ENCODE measurements at regions of chr5 and their contacts with region 1.

Region 1: DNA sequence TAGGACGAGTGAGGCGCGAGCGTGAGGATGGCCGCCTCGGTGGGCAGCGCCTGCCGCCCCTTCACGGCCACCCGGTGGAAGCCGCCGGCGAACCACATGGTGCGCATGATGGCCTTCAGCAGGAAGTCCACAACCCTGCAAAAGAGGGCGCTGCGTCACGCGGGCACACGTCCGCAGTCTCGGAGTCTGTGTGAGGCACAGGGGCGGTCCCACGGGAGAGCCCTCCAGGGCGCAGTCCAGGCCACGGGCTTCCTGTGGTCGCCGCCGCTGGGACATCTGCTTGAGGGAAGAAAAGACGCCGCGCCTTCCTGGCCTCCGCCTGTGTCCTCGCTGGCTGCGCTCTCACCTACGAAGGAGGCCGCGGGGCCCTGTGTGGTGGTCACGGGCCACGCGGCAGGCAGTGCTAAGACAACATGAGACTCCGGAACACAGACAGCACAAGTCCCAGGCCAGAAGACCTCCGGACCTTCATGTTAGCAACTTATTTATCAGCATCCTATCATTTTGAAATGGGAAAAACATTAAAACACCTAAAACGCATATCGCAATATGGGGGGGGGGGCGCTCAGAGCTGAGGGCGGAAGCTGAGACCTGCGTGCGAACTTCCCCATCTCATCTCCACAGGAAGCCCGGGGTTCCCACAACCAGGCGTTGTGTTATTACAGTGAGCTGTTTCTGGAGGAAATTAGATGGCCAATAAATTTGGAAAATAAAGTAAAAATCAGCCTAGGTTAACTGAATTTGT is 28.8 kb downstream of the LPCAT1 start:
- DNase-seq: peak in 2 of 5 donors; percentile 45 to 79
- ATAC-seq: peak in 2 of 4 donors; percentile 45 to 46
- H3K4me3 ChIP-seq: no peak overlapping the region
- H3K27ac ChIP-seq: peak overlapping the region in 1 of 12 donors; percentile 64
- H3K4me1 ChIP-seq: peaks cover 0 to 47% (median 2%) of the 10 kb centered on the region in 12 donors
- H3K27me3 ChIP-seq: no peaks in the 10 kb centered on the region
- CTCF ChIP-seq: no peak
- POLR2A ChIP-seq: no peak

Region 2: DNA sequence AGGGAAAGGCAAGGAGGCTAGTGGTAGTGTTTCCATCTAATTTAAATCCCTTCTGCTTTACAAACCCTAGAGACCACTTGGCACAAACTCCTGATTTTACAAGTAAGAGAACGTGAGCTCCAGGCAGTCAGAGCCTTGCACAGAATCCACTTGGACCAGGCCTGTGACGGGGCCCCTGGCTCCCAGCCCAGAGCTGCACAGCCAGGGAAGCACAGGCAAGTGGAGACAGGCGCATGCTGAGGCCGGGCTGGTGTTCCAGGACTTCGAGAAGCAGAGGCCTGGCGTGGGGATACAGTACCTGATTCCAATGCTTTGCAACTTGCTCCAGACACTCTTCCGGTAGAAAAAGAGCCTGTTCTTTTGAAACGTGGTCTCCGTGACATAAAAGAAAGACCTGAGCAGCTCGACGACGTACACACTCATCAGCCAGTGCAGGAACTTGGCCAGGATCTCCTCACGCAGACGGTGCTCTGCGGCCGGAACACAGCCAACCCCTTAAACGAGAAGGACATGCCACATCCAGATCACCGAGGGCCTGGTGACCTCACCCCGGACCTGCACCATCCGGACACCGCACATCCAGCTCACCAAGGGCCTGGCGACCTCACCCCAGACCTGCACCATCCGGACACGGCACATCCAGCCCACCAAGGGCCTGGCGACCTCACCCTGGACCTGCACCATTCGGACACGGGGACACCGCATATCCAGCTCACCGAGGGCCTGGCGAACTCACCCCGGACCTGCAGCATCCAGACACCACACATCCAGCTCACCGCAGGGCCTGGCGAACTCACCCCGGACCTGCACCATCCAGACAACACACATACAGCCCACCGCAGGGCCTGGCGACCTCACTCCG is 212.6 kb before region 1 on chr5:
- intact Hi-C with region 1: no loop called
- DNase-seq: peak in 3 of 5 donors; percentile 62 to 75 (median 70)
- ATAC-seq: peak; percentile 67 to 86 (median 77)
- H3K4me3 ChIP-seq: no peak overlapping the region
- H3K27ac ChIP-seq: no peak overlapping the region
- H3K4me1 ChIP-seq: no peaks in the 10 kb centered on the region
- H3K27me3 ChIP-seq: no peaks in the 10 kb centered on the region
- CTCF ChIP-seq: no peak
- POLR2A ChIP-seq: no peak

Region 3: GRCh38 chr5:1555011-1555807 is 60.3 kb after region 1 on chr5:
- intact Hi-C with region 1: loop called in 1 of 10 experiments (anchors 10 kb)
- DNase-seq: peak in 1 of 5 donors; percentile 45
- ATAC-seq: no peak
- H3K4me3 ChIP-seq: no peak overlapping the region
- H3K27ac ChIP-seq: no peak overlapping the region
- H3K4me1 ChIP-seq: peaks cover 0 to 4% (median 0%) of the 10 kb centered on the region in 12 donors
- H3K27me3 ChIP-seq: peaks cover 0 to 7% (median 0%) of the 10 kb centered on the region in 9 donors
- CTCF ChIP-seq: no peak
- POLR2A ChIP-seq: no peak

Region 4: DNA sequence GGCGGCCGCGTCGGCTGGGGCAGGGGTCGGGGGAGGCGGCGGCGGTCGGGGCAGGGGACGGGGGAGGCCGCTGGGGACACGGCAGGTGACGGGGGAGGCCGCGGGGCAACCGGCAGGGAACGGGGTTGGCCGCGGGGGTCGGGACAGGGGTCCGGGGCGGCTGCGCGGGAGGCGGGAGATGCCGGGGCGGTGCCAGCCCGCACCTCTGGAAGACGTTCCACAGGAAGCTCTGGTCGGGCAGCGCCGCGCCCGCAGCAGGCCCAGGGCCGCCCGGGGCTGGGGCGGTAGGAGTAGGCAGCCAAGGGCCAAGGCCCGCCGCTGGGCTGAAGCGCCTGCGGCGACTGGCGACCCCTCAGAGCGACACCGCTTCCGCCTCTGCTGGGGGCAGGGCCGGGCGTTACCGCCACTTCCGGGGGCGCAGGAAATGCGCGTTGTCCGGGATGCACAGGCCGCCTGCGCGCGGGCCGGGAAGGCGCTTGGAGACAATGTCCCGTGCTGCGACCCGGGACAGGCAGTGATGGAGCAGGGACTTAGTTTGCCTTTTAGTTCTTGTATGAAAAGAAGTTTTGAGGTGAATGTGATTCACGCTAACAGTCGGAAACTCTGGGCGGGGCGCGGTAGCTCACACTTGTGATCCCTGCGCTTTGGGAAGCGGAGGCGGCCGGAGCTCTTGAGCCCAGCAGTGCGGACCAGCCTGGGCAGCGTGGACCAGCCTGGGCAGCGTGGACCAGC is 138.8 kb after region 1 on chr5:
- intact Hi-C with region 1: loop called in 1 of 10 experiments (anchors 10 kb)
- DNase-seq: peak; percentile 85 to 91 (median 88)
- ATAC-seq: peak; percentile 94 to 99 (median 98)
- H3K4me3 ChIP-seq: peak overlapping the region; percentile 54 to 94 (median 76)
- H3K27ac ChIP-seq: peak overlapping the region; percentile 36 to 92 (median 84)
- H3K4me1 ChIP-seq: peaks cover 0 to 8% (median 0%) of the 10 kb centered on the region in 12 donors
- H3K27me3 ChIP-seq: peaks cover 0 to 3% (median 0%) of the 10 kb centered on the region in 9 donors
- CTCF ChIP-seq: no peak
- POLR2A ChIP-seq: peak in 1 of 2 donors; percentile 78